ENCODE measurements at regions of chr1 and their contacts with region 1.

Region 1: GRCh38 chr1:244302889-244303613 is 148.7 kb downstream of the ADSS2 start:
- DNase-seq: no peak
- H3K4me3 ChIP-seq: no peak overlapping the region
- H3K27ac ChIP-seq: no peak overlapping the region
- H3K27me3 ChIP-seq: no peaks in the 10 kb centered on the region
- CTCF ChIP-seq: no peak

Region 2: GRCh38 chr1:244341455-244342450 is 38.7 kb after region 1 on chr1:
- intact Hi-C with region 1: loop called in 1 of 2 experiments (anchors 5 kb)
- DNase-seq: peak in 7 of 10 donors; percentile 41 to 75 (median 54)
- H3K4me3 ChIP-seq: peak overlapping the region in 56 of 59 donors; percentile 0 to 60 (median 33)
- H3K27ac ChIP-seq: peak overlapping the region in 58 of 59 donors; percentile 55 to 98 (median 88)
- H3K27me3 ChIP-seq: no peaks in the 10 kb centered on the region
- CTCF ChIP-seq: peak in 2 of 56 donors; percentile 12 to 19